Activated naive CD4-positive, alpha-beta T cell treated with anti-CD3 and anti-CD28 coated beads for 36 hours (primary cell): ENCODE measurements at regions of chr4 and their contacts with region 1.

Region 1: DNA sequence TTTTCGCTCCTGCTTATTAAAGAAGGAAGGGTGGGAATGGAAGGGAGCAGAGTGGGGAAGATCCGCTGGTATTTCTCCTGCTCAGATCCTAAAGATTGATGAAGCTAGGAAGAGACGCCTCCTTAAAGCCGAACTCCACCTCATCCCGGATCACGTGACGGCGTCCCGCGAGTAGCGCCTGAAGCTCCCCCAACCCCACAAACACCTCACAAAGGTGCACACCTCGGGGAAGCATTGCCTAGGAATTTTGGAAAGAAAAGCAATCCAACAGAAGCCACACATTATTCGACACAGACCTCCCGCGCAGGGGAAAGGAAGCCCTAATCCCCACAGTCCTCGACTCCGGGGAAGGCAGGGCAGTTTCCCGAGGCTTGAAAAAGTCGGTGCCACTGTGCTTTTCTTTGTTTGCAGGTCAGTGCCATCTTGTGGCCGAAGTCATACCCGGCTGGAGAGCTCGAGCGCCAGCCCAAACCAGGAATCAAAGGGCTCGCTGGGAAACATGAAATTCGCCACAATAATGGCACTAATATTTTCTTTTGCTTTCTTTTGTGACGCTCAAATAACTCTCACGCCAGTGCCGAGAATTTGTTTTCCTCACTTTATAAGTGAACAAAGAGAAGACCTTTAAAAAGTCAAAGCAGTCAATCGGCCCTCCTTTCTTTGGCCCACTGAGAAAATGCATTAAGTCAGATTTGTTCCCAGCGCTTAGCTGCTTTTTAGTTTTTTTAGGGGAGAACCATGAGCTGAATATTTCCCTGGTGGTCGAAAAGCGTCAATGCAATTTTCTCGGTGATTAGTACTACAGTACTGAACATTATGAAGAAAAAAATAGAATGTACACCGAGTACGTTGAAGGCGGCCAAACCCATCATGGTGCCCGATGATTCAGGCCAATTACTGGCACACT is at the start of gene NPY1R:
- DNase-seq: peak; percentile 65
- H3K4me3 Mint-ChIP-seq: peak within 1 kb of the TSS; percentile 55
- H3K27ac Mint-ChIP-seq: no peak within 1 kb of the TSS
- H3K4me1 Mint-ChIP-seq: peaks cover 14% of the 10 kb centered on the region
- H3K27me3 Mint-ChIP-seq: peaks cover 43% of the 10 kb centered on the region
- total RNA-seq, gene NPY1R: not detected

Region 2: GRCh38 chr4:162497564-162498167 is 835.1 kb before region 1 on chr4:
- CTCF ChIA-PET with region 1: interaction called, 3 read pairs
- intact Hi-C with region 1: loop called (anchors 1 kb)
- DNase-seq: peak; percentile 12
- H3K4me3 Mint-ChIP-seq: no peak overlapping the region
- H3K27ac Mint-ChIP-seq: no peak overlapping the region
- H3K4me1 Mint-ChIP-seq: no peaks in the 10 kb centered on the region
- H3K27me3 Mint-ChIP-seq: peaks cover 8% of the 10 kb centered on the region

Region 3: DNA sequence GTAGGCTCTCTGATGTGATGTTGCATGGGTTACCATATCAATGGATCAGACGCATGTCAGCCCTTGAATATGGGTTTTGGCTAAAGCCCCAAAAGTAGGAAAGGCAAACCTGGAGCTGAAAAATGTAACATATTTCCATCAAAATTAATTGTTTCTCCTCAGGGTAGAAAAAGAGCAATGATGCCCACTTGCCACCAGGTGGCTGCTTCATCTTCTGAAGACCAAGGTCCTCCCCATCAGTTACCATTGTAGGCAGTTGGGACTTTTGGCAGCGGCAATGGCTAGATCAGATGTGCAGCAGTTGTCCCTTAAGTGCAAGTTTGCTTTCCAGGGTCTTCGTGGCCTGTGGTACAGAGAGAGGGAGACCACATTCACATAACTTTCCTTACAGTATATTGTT is 284.3 kb before region 1 on chr4:
- CTCF ChIA-PET with region 1: interaction called, 3 read pairs
- intact Hi-C with region 1: loop called (anchors 1 kb)
- DNase-seq: peak; percentile 23
- H3K4me3 Mint-ChIP-seq: no peak overlapping the region
- H3K27ac Mint-ChIP-seq: no peak overlapping the region
- H3K4me1 Mint-ChIP-seq: no peaks in the 10 kb centered on the region
- H3K27me3 Mint-ChIP-seq: peaks cover 16% of the 10 kb centered on the region

Region 4: DNA sequence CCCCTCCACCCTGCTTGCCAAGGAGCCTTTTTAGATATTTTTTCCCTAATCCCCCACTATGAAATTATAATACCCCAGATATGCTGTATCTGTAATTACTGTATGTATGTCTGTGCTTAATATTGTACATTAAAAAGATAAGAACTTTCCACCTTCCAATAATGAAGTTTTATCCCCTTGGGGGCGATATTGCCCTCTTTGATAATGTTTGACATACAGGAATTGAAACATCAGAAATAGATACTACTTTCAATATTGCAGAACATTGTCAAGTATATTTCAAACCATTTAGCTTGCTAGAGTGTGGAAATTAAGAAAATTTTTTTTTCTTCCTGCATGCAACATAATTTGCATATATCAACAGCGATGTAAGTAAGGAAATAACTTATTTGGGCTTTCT is 225.0 kb before region 1 on chr4:
- CTCF ChIA-PET with region 1: interaction called, 5 read pairs
- intact Hi-C with region 1: loop called (anchors 1 kb)
- DNase-seq: no peak
- H3K4me3 Mint-ChIP-seq: no peak overlapping the region
- H3K27ac Mint-ChIP-seq: no peak overlapping the region
- H3K4me1 Mint-ChIP-seq: peaks cover 10% of the 10 kb centered on the region
- H3K27me3 Mint-ChIP-seq: no peaks in the 10 kb centered on the region

Region 5: DNA sequence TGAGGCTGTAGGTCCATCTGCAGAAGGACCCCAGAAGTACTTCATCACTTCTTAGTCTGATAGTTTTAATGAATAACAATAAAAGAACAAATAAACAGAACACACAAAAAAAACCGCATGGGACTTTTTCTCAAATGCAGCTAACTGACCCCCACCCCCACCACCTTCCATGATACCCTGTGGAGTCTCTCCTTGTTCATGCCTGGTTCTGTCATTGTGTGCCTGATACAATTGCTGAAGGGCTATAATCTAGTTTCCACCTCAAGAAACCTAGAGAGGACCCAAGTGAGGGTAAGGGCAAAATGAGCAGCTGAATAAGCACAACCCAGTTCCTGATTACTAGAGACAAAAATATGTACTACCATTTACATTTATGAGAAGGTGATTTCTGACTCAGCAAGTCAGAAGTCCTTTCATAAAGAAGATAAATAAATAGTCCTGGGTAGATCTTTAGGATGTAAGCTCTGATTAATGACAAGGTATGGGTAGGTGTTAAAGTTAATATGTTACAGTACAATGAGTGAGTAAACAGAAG is 316.9 kb after region 1 on chr4:
- CTCF ChIA-PET with region 1: no interaction called
- intact Hi-C with region 1: no loop called
- DNase-seq: no peak
- H3K4me3 Mint-ChIP-seq: no peak overlapping the region
- H3K27ac Mint-ChIP-seq: no peak overlapping the region
- H3K4me1 Mint-ChIP-seq: no peaks in the 10 kb centered on the region
- H3K27me3 Mint-ChIP-seq: no peaks in the 10 kb centered on the region